GM18951 (cell line): ENCODE measurements at regions of chr9 and their contacts with region 1.

Region 1: GRCh38 chr9:114487607-114488300 is 17.5 kb downstream of the WHRN start:
- POLR2A ChIP-seq: no peak

Region 2: GRCh38 chr9:114653556-114654159 is 165.9 kb after region 1 on chr9:
- in situ Hi-C with region 1: loop called (anchors 5 kb)
- POLR2A ChIP-seq: no peak